A673 (cell line): ENCODE measurements at regions of chr17 and their contacts with region 1.

Region 1: DNA sequence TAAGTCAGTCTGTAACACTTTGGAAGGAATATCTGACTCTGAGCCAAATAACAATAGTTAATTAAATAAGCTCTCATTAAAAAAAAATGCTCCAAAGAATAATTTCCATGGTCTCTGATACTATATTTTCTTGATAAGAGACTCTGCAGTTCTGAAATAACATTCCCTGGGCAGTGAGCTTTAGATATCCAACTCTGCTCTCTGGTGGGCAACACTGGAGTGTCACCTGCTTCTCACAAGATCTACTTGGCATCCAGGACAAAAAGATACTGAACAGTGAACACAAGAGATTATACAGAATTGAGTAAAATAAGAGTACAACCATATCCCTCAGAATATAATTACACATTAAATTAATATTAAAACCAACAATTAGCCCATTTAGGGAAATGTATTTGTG is 13.7 kb downstream of the BLMH start:
- DNase-seq: peak; percentile 53
- H3K4me3 ChIP-seq: no peak overlapping the region
- H3K27ac ChIP-seq: no peak overlapping the region
- H3K4me1 ChIP-seq: peaks cover 7% of the 10 kb centered on the region
- H3K27me3 ChIP-seq: no peaks in the 10 kb centered on the region
- CTCF ChIP-seq: peak; percentile 63

Region 2: GRCh38 chr17:29903471-29903870 is 374.6 kb before region 1 on chr17:
- CTCF ChIA-PET with region 1: no interaction called
- POLR2A ChIA-PET with region 1: no interaction called
- intact Hi-C with region 1: no loop called
- DNase-seq: no peak
- H3K4me3 ChIP-seq: no peak overlapping the region
- H3K27ac ChIP-seq: no peak overlapping the region
- H3K4me1 ChIP-seq: no peaks in the 10 kb centered on the region
- H3K27me3 ChIP-seq: no peaks in the 10 kb centered on the region
- CTCF ChIP-seq: no peak

Region 3: GRCh38 chr17:30104575-30105339 is 173.3 kb before region 1 on chr17:
- CTCF ChIA-PET with region 1: interaction called, 10 read pairs
- POLR2A ChIA-PET with region 1: no interaction called
- intact Hi-C with region 1: loop called (anchors 5 kb)
- DNase-seq: peak; percentile 88
- H3K4me3 ChIP-seq: peak overlapping the region; percentile 44
- H3K27ac ChIP-seq: no peak overlapping the region
- H3K4me1 ChIP-seq: no peaks in the 10 kb centered on the region
- H3K27me3 ChIP-seq: no peaks in the 10 kb centered on the region
- CTCF ChIP-seq: peak; percentile 98

Region 4: GRCh38 chr17:30124273-30124796 is 153.7 kb before region 1 on chr17:
- CTCF ChIA-PET with region 1: interaction called, 5 read pairs
- POLR2A ChIA-PET with region 1: no interaction called
- intact Hi-C with region 1: loop called (anchors 1 kb)
- DNase-seq: no peak
- H3K4me3 ChIP-seq: no peak overlapping the region
- H3K27ac ChIP-seq: no peak overlapping the region
- H3K4me1 ChIP-seq: peaks cover 7% of the 10 kb centered on the region
- H3K27me3 ChIP-seq: no peaks in the 10 kb centered on the region
- CTCF ChIP-seq: no peak

Region 5: DNA sequence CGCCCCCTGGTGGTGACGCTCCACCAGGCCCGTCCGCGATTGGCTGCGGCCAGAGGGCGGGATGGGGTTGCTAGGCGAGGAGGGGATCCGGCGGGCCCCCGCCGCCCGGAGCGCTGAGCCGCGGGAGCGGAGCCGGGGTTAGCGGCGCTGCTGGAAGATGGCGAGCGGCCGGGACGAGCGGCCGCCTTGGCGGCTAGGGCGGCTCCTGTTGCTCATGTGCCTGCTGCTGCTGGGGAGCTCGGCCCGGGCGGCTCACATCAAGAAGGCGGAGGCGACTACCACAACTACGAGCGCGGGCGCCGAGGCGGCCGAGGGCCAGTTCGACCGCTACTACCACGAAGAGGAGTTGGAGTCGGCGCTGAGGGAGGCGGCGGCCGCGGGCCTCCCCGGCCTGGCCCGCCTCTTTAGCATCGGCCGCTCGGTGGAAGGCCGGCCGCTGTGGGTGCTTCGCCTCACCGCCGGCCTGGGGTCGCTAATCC is 100.8 kb after region 1 on chr17 and contains the start of gene CPD:
- CTCF ChIA-PET with region 1: no interaction called
- POLR2A ChIA-PET with region 1: no interaction called
- intact Hi-C with region 1: no loop called
- DNase-seq: peak; percentile 97
- H3K4me3 ChIP-seq: peak within 1 kb of the TSS; percentile 77
- H3K27ac ChIP-seq: peak within 1 kb of the TSS; percentile 88
- H3K4me1 ChIP-seq: peaks cover 43% of the 10 kb centered on the region
- H3K27me3 ChIP-seq: no peaks in the 10 kb centered on the region
- CTCF ChIP-seq: no peak
- total RNA-seq, gene CPD: 38.0 and 52.6 TPM in 2 replicates